MCF 10A (cell line): ENCODE measurements at regions of chr2 and their contacts with region 1.

Region 1: GRCh38 chr2:68157402-68158133 is at the start of gene PNO1:
- DNase-seq: peak; percentile 95
- H3K4me3 Mint-ChIP-seq: peak within 1 kb of the TSS; percentile 98
- H3K27ac Mint-ChIP-seq: peak within 1 kb of the TSS; percentile 100
- H3K4me1 Mint-ChIP-seq: peaks cover 12% of the 10 kb centered on the region
- H3K27me3 Mint-ChIP-seq: no peaks in the 10 kb centered on the region
- CTCF ChIP-seq: no peak
- total RNA-seq, gene PNO1: 27.9 and 35.0 TPM in 2 replicates

Region 2: GRCh38 chr2:68121873-68122679 is 35.5 kb before region 1 on chr2:
- CTCF ChIA-PET with region 1: interaction called, 10 read pairs
- POLR2A ChIA-PET with region 1: interaction called, 4 read pairs
- intact Hi-C with region 1: no loop called
- DNase-seq: peak; percentile 84
- H3K4me3 Mint-ChIP-seq: no peak overlapping the region
- H3K27ac Mint-ChIP-seq: no peak overlapping the region
- H3K4me1 Mint-ChIP-seq: peaks cover 5% of the 10 kb centered on the region
- H3K27me3 Mint-ChIP-seq: no peaks in the 10 kb centered on the region
- CTCF ChIP-seq: peak; percentile 97

Region 3: DNA sequence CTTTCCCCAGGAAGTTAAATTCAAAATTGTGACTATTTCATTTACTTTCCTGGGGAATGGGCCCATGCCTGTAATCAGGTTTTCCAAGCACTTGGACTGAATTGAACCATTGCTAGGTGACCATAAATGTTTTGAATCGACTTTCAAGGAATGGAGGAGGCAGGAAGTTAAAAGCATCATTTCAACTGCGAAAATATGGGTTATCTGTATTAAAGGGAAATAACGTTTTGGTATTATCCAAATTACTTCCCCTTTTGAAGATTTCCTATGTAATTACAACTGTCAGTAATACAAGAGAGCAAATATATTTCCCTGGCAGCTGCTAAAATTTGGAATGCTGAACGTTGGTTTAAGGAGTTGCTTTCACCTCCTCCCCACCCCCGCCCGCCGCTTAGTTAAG is 19.1 kb after region 1 on chr2:
- CTCF ChIA-PET with region 1: no interaction called
- POLR2A ChIA-PET with region 1: interaction called, 11 read pairs
- intact Hi-C with region 1: no loop called
- DNase-seq: no peak
- H3K4me3 Mint-ChIP-seq: no peak overlapping the region
- H3K27ac Mint-ChIP-seq: no peak overlapping the region
- H3K4me1 Mint-ChIP-seq: peaks cover 6% of the 10 kb centered on the region
- H3K27me3 Mint-ChIP-seq: no peaks in the 10 kb centered on the region
- CTCF ChIP-seq: no peak

Region 4: DNA sequence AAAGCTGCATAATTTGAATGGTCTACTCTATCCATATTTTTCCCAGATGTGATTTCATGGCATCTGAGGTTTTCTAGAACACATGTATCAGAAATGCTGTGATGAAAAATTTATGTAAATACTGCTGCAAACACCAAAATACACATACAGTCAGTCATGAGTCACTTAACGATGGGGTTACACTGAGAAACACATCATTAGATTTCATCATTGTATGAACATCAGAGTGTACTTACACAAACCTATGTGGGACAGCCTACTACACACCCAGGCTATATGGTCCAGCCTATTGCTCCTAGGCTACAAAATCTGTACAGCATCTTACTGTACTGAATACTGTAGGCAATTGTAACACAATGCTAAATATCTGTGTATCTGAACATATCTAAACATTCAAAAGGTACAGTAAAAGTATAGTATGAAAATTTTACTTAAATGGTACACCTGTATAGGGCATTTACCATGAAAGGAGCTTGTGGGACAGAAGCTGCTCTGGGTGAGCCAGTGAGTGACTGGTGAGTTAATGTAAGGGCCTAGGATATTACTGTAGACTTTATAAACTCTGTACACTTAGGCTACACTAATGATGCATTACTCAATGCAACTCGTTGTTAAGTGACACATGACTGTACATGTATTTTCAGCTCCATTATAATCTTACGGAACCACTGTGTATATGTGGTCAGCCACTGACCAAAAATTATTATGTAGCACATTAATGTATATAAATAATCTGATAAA is 33.6 kb after region 1 on chr2:
- CTCF ChIA-PET with region 1: interaction called, 10 read pairs
- POLR2A ChIA-PET with region 1: interaction called, 12 read pairs
- intact Hi-C with region 1: loop called (anchors 5 kb)
- DNase-seq: peak; percentile 82
- H3K4me3 Mint-ChIP-seq: no peak overlapping the region
- H3K27ac Mint-ChIP-seq: peak overlapping the region; percentile 81
- H3K4me1 Mint-ChIP-seq: peaks cover 43% of the 10 kb centered on the region
- H3K27me3 Mint-ChIP-seq: no peaks in the 10 kb centered on the region
- CTCF ChIP-seq: no peak

Region 5: GRCh38 chr2:68251187-68251854 is 93.8 kb after region 1 on chr2:
- CTCF ChIA-PET with region 1: interaction called, 3 read pairs
- POLR2A ChIA-PET with region 1: interaction called, 66 read pairs
- intact Hi-C with region 1: loop called (anchors 5 kb)
- DNase-seq: peak; percentile 87
- H3K4me3 Mint-ChIP-seq: peak overlapping the region; percentile 99
- H3K27ac Mint-ChIP-seq: peak overlapping the region; percentile 96
- H3K4me1 Mint-ChIP-seq: peaks cover 18% of the 10 kb centered on the region
- H3K27me3 Mint-ChIP-seq: no peaks in the 10 kb centered on the region
- CTCF ChIP-seq: peak; percentile 45

Region 6: DNA sequence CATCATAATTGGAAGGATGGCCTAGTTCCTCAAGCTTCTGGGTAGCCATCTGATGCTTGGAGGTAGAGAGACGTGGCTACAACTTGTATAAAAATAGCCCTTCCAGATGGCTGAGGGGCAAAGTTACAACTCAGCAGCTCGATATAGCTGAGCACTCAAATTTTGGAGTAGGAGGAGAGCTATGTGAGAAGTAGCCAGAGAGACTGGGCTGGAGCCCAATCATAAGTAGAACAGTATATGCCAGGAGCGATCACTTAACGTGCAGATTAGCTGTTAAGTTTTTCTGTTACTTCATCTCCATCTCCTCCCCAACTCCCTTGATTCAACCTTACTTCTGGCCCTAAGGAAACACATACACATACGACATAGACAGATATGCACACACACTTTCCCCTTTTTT is 133.3 kb after region 1 on chr2:
- CTCF ChIA-PET with region 1: interaction called, 11 read pairs
- POLR2A ChIA-PET with region 1: interaction called, 20 read pairs
- intact Hi-C with region 1: no loop called
- DNase-seq: no peak
- H3K4me3 Mint-ChIP-seq: no peak overlapping the region
- H3K27ac Mint-ChIP-seq: no peak overlapping the region
- H3K4me1 Mint-ChIP-seq: peaks cover 10% of the 10 kb centered on the region
- H3K27me3 Mint-ChIP-seq: no peaks in the 10 kb centered on the region
- CTCF ChIP-seq: no peak